ENCODE measurements at regions of chr22 and their contacts with region 1.

Region 1: GRCh38 chr22:46013460-46014416 is 36.8 kb upstream of the WNT7B start:
- DNase-seq: peak; percentile 79
- ATAC-seq: peak; percentile 97
- H3K4me3 Mint-ChIP-seq: peak overlapping the region; percentile 91
- H3K27ac Mint-ChIP-seq: peak overlapping the region; percentile 82
- H3K4me1 Mint-ChIP-seq: peaks cover 7% of the 10 kb centered on the region
- H3K27me3 Mint-ChIP-seq: no peaks in the 10 kb centered on the region
- CTCF ChIP-seq: no peak

Region 2: GRCh38 chr22:45994491-45995404 is 19.0 kb before region 1 on chr22:
- CTCF ChIA-PET with region 1: interaction called, 13 read pairs
- POLR2A ChIA-PET with region 1: interaction called, 12 read pairs
- intact Hi-C with region 1: loop called (anchors 1 kb)
- DNase-seq: peak; percentile 79
- ATAC-seq: peak; percentile 51
- H3K4me3 Mint-ChIP-seq: no peak overlapping the region
- H3K27ac Mint-ChIP-seq: no peak overlapping the region
- H3K4me1 Mint-ChIP-seq: peaks cover 26% of the 10 kb centered on the region
- H3K27me3 Mint-ChIP-seq: peaks cover 2% of the 10 kb centered on the region
- CTCF ChIP-seq: peak; percentile 24

Region 3: DNA sequence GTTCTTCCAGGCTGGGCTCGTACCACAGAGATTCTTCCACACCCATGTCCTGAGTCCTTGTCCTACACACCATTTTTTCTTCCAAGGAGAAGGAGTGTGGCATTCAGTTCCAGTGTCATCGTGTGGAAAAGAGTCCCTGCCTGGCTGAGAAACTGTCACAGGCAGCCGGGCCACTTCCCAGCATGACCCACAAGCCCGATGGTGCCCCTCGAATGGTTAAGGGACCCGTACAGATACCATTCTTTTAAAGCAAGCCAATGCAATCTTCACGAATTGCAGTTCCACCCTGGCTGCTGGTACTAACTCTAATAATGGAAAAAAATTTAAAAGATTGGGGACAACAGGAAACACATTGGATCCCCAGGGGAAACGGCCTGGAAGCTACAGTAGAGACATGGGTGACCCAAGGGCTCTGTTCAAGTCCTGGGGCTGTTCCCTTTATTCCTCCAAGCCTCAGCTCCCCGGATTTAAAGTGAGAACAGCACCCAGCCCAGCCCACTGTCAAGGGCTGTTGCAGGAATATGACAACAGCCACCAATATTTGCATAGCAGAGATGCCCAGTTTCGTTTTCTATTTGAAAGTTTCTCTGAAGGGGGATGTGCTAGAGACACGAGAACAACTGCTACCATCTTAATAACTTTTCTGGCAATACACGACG is 44.2 kb after region 1 on chr22:
- CTCF ChIA-PET with region 1: interaction called, 3 read pairs
- POLR2A ChIA-PET with region 1: interaction called, 17 read pairs
- intact Hi-C with region 1: loop called (anchors 5 kb)
- DNase-seq: no peak
- ATAC-seq: peak; percentile 76
- H3K4me3 Mint-ChIP-seq: peak overlapping the region; percentile 65
- H3K27ac Mint-ChIP-seq: peak overlapping the region; percentile 91
- H3K4me1 Mint-ChIP-seq: peaks cover 51% of the 10 kb centered on the region
- H3K27me3 Mint-ChIP-seq: no peaks in the 10 kb centered on the region
- CTCF ChIP-seq: no peak

Region 4: GRCh38 chr22:46071451-46072109 is 57.8 kb after region 1 on chr22:
- CTCF ChIA-PET with region 1: interaction called, 7 read pairs
- POLR2A ChIA-PET with region 1: interaction called, 23 read pairs
- intact Hi-C with region 1: loop called (anchors 1 kb)
- DNase-seq: peak; percentile 61
- ATAC-seq: peak; percentile 22
- H3K4me3 Mint-ChIP-seq: peak overlapping the region; percentile 87
- H3K27ac Mint-ChIP-seq: peak overlapping the region; percentile 84
- H3K4me1 Mint-ChIP-seq: peaks cover 27% of the 10 kb centered on the region
- H3K27me3 Mint-ChIP-seq: no peaks in the 10 kb centered on the region
- CTCF ChIP-seq: no peak

Region 5: DNA sequence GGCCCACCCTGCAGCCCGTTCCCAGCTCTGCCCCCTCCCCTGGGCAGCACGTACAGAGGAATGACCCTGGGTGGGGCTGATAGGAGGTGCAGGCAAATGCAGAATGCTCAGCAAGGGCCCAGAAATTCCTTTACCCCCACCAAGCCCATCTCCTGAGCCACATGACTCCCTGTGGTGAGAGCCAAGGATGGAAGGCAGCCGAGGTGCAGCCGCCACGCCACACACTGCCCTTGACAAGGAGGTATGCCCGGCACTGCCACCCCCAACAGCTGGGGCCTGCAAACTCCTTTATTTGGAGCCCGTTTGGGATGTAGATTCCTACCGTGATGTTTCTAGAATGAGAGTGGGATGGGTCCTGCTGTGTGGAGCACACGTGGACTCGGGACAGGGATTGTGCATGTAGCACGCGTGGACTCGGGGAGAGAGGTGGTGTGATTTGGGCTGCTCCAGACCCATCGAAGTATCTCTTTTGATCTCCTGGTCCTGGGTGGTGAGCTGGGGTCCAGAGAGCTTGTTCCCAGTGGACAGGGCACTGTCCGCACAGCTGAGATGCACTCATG is 295.9 kb after region 1 on chr22:
- CTCF ChIA-PET with region 1: no interaction called
- POLR2A ChIA-PET with region 1: no interaction called
- intact Hi-C with region 1: loop called (anchors 5 kb)
- DNase-seq: no peak
- ATAC-seq: no peak
- H3K4me3 Mint-ChIP-seq: no peak overlapping the region
- H3K27ac Mint-ChIP-seq: no peak overlapping the region
- H3K4me1 Mint-ChIP-seq: no peaks in the 10 kb centered on the region
- H3K27me3 Mint-ChIP-seq: no peaks in the 10 kb centered on the region
- CTCF ChIP-seq: no peak

Region 6: GRCh38 chr22:46528121-46528610 is 514.4 kb after region 1 on chr22:
- CTCF ChIA-PET with region 1: no interaction called
- POLR2A ChIA-PET with region 1: no interaction called
- intact Hi-C with region 1: no loop called
- DNase-seq: no peak
- ATAC-seq: no peak
- H3K4me3 Mint-ChIP-seq: no peak overlapping the region
- H3K27ac Mint-ChIP-seq: no peak overlapping the region
- H3K4me1 Mint-ChIP-seq: no peaks in the 10 kb centered on the region
- H3K27me3 Mint-ChIP-seq: peaks cover 30% of the 10 kb centered on the region
- CTCF ChIP-seq: no peak

Measured in activated B cell treated with CpG ODN at 0.5 μM for 24 hours (primary cell).